Esophagus squamous epithelium (tissue), 5 donors: ENCODE measurements at regions of chr10 and their contacts with region 1.

Region 1: DNA sequence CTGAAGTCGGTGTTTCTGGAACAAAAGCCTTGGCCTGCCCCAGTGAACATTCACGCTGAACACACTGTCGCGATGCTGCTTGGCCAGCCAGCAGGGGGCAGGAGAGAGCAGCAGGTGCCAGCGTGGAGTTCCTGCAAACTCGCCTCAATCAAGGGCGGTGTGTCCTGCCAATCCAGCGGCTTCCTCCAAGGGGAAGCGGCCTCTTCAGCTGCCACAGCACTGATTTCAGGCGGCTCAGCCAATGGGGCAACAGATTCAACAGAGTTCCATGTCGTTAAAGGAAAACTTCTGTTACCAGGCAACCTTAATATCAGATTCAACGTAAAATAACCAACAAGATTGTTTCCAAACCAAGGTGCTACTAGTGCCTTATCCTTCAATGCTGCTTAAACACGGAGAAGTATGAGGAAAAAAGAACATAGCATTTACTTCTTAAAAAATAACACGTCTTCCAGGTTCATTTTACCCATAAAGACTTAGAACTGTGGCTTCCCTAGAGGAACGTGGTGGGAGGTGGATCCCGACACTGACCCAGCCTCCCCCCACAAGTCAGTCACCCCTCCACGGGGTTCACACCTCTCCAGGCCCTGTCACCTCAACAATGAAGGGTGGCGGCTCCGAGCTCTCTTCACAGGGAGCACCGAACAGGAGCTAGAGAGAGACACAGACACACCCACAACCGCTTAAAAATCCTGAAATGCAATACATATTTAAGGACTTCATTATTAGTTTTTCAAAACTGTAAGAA is 178.2 kb downstream of the DIP2C start:
- DNase-seq: peak; percentile 35
- H3K4me3 ChIP-seq: no peak overlapping the region
- H3K27ac ChIP-seq: peak overlapping the region; percentile 36 to 73 (median 67)
- H3K4me1 ChIP-seq: peaks cover 4 to 45% (median 20%) of the 10 kb centered on the region in 3 donors
- H3K27me3 ChIP-seq: no peaks in the 10 kb centered on the region
- CTCF ChIP-seq: peak; percentile 60 to 98 (median 96)
- POLR2A ChIP-seq: no peak

Region 2: DNA sequence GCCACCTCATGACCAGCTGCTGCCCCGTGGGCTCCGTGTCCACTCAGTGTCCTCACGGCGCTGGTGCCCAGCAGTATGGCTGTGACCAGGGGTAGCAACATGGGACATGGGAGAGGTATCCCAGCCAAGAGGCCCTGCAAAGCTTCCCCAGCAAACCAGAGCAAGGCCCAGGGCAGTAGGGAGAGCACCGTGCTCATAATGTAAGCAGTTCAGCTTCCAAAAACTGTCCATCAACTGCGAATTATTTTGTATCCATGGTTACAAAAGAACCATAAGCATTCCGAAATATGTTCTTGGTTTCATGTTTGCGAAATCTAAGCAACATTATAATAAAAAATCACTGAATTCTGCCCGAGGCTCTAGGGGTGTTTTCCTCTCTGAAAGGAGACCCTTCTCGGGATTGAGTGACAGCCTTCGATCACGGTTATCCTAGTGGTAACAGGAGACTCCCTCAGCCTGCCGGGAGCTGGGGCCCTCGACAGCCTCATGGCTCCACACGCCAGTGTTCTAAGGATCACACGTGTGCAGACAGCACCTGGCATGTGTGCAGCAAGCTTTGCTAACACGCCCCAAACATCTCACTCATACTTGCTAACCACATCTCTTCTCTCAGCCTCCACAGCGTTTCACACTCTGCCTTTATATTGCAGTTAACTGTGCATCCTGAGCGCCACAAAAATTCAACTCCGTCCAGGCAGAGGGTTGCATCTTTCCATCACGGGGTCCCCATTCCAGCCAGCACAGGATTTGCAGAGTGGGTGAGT is 60.6 kb after region 1 on chr10:
- intact Hi-C with region 1: no loop called
- DNase-seq: no peak
- H3K4me3 ChIP-seq: no peak overlapping the region
- H3K27ac ChIP-seq: peak overlapping the region in 2 of 4 donors; percentile 1 to 31
- H3K4me1 ChIP-seq: peaks cover 0 to 36% (median 0%) of the 10 kb centered on the region in 3 donors
- H3K27me3 ChIP-seq: no peaks in the 10 kb centered on the region
- CTCF ChIP-seq: no peak
- POLR2A ChIP-seq: no peak

Region 3: DNA sequence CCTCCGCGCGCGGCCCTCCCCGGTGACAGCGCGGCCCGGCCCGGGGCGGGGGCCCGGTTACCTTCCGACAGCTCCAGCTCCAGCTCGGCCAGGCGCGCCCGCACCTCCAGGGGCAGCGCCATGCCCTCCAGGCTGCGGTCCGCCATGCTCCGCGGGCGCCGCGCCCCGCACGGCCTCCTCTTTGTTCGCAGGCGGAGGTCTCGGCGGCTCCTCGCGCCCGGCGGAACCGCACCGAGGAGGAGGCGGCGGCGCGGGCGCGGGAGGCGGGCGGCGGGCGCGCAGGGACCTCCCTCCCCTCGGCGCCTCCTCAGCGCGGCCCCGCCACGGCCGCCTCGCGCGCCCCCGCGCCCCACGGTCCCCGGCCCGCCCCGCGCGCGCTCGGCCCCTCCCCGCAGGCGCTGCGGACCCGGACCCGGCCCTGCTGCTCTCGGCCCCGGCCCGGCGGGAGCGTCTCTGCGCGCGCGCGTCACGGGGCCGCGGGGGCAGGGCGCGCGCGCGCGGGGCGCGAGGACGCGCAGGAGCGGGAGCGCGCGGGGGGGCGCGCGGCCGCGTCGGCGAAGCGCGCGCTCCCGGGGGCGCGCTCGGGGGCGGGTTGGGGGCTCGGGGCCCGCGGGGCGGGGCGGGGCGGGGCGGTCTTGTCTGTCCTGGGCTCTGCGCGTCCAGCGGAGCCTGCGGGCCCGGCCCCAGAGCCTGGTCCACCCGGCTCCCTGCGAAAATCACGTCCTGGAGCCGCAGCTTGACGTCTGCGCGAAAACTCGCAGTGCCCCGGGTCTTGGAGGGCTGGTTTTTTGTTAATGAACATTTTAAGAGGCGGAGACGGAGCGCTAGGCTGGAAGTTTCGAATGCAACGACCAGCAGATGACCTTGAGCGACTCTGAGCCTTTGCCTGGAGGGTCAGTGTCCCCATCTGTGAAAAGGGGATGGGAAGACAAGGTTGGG is 178.4 kb after region 1 on chr10 and contains the start of gene DIP2C:
- intact Hi-C with region 1: loop called (anchors 10 kb)
- DNase-seq: no peak
- H3K4me3 ChIP-seq: peak within 1 kb of the TSS; percentile 61 to 87 (median 70)
- H3K27ac ChIP-seq: peak within 1 kb of the TSS; percentile 75 to 91 (median 86)
- H3K4me1 ChIP-seq: peaks cover 5 to 43% (median 14%) of the 10 kb centered on the region in 3 donors
- H3K27me3 ChIP-seq: peaks cover 0 to 12% (median 0%) of the 10 kb centered on the region in 4 donors
- CTCF ChIP-seq: no peak
- POLR2A ChIP-seq: peak in 2 of 4 donors; percentile 37 to 39
- total RNA-seq, gene DIP2C: 2.4 to 14.9 (median 6.1) TPM

Region 4: DNA sequence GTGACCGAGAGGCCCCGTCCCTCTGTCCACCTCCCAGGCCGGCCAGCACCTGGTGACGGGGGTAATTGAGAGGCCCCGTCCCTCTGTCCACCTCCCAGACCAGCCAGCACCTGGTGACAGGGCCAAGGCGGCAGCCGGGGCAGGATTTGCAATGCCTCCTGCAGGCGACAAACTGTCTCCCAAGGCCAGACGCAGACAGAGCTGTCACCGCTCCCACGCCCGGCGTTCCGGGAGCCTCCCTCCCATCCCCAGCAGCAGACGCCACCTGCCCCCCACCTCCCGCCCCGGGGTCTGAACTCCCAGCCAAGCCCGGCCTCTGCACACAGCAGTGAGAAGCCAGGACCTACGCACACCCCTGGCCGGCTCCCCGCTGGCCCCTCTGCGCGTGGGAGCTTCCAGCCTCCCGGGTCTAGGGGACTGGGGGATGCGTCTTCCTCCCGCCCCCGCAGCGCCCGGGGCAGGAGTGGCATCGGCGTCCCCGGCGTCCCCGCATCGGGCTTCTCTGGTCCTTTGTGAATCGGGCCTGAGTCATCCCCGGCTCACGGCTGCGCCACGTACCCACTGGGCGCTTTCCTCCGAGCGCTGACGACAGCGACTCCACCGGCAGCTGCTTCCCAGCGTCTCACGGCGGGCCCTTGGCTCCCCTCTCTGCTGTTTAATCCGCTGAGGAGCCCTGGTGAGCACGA is 273.3 kb after region 1 on chr10:
- intact Hi-C with region 1: loop called (anchors 10 kb)
- DNase-seq: no peak
- H3K4me3 ChIP-seq: peak overlapping the region; percentile 8 to 60 (median 37)
- H3K27ac ChIP-seq: no peak overlapping the region
- H3K4me1 ChIP-seq: peaks cover 17 to 23% (median 20%) of the 10 kb centered on the region in 3 donors
- H3K27me3 ChIP-seq: peaks cover 0 to 60% (median 0%) of the 10 kb centered on the region in 4 donors
- CTCF ChIP-seq: peak in 4 of 6 experiments; percentile 8 to 20 (median 14)
- POLR2A ChIP-seq: no peak